ENCODE measurements at regions of chr5 and their contacts with region 1.

Region 1: GRCh38 chr5:42889311-42889933 is 77.7 kb upstream of the SELENOP start:
- DNase-seq: peak in 4 of 5 donors; percentile 68 to 78 (median 74)
- ATAC-seq: peak; percentile 86 to 96 (median 91)
- H3K4me3 ChIP-seq: no peak overlapping the region
- H3K27ac ChIP-seq: no peak overlapping the region
- H3K4me1 ChIP-seq: peaks cover 0 to 7% (median 0%) of the 10 kb centered on the region in 12 donors
- H3K27me3 ChIP-seq: no peaks in the 10 kb centered on the region
- CTCF ChIP-seq: peak; percentile 83 to 99 (median 91)
- POLR2A ChIP-seq: no peak

Region 2: GRCh38 chr5:41869739-41870626 is 1019.4 kb before region 1 on chr5 and contains the start of gene OXCT1:
- intact Hi-C with region 1: loop called in 1 of 10 experiments (anchors 5 kb)
- DNase-seq: peak; percentile 78 to 92 (median 85)
- ATAC-seq: peak; percentile 64 to 88 (median 84)
- H3K4me3 ChIP-seq: peak within 1 kb of the TSS; percentile 64 to 91 (median 78)
- H3K27ac ChIP-seq: peak within 1 kb of the TSS; percentile 84 to 96 (median 92)
- H3K4me1 ChIP-seq: peaks cover 0 to 35% (median 18%) of the 10 kb centered on the region in 12 donors
- H3K27me3 ChIP-seq: no peaks in the 10 kb centered on the region
- CTCF ChIP-seq: no peak
- POLR2A ChIP-seq: peak in 1 of 2 donors; percentile 67
- total RNA-seq, gene OXCT1: 73.4 to 363 (median 205) TPM

Region 3: GRCh38 chr5:42005561-42006153 is 883.8 kb before region 1 on chr5:
- intact Hi-C with region 1: loop called in 2 of 10 experiments (anchors 10 kb)
- DNase-seq: no peak
- ATAC-seq: no peak
- H3K4me3 ChIP-seq: no peak overlapping the region
- H3K27ac ChIP-seq: no peak overlapping the region
- H3K4me1 ChIP-seq: no peaks in the 10 kb centered on the region
- H3K27me3 ChIP-seq: no peaks in the 10 kb centered on the region
- CTCF ChIP-seq: peak; percentile 49 to 77 (median 66)
- POLR2A ChIP-seq: no peak

Region 4: DNA sequence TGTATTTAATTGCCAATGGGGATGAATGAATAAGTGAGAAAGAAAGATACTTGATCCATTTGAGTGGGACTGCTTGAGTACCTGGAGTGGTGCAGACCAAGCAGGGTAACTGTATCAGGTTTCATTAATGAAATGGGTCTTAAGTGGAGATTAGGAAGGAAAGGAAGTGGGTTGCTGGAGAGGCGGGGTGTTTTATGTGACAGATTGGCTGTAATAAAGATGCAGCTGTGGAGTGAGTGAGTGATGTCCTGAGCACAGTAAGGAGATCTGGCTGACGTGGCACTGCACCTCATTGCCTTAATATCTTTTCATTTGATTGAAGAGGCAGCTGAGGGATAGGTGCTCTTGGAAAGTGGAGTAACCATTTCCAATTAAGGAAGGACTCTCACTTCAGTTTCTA is 293.8 kb before region 1 on chr5:
- intact Hi-C with region 1: no loop called
- DNase-seq: no peak
- ATAC-seq: no peak
- H3K4me3 ChIP-seq: no peak overlapping the region
- H3K27ac ChIP-seq: no peak overlapping the region
- H3K4me1 ChIP-seq: peaks cover 0 to 35% (median 23%) of the 10 kb centered on the region in 12 donors
- H3K27me3 ChIP-seq: no peaks in the 10 kb centered on the region
- CTCF ChIP-seq: no peak
- POLR2A ChIP-seq: no peak

Region 5: GRCh38 chr5:42767491-42768105 is 121.8 kb before region 1 on chr5:
- intact Hi-C with region 1: loop called in 6 of 10 experiments (anchors 2 to 10 kb)
- DNase-seq: no peak
- ATAC-seq: peak in 1 of 4 donors; percentile 52
- H3K4me3 ChIP-seq: no peak overlapping the region
- H3K27ac ChIP-seq: no peak overlapping the region
- H3K4me1 ChIP-seq: peaks cover 0 to 4% (median 0%) of the 10 kb centered on the region in 12 donors
- H3K27me3 ChIP-seq: no peaks in the 10 kb centered on the region
- CTCF ChIP-seq: peak; percentile 27 to 71 (median 58)
- POLR2A ChIP-seq: no peak

Region 6: GRCh38 chr5:42811591-42812446 is 77.6 kb before region 1 on chr5 and contains the start of gene SELENOP:
- intact Hi-C with region 1: loop called in 9 of 10 experiments (anchors 1 to 10 kb)
- DNase-seq: peak in 4 of 5 donors; percentile 49 to 79 (median 66)
- ATAC-seq: peak; percentile 95 to 96 (median 96)
- H3K4me3 ChIP-seq: peak within 1 kb of the TSS; percentile 18 to 70 (median 58)
- H3K27ac ChIP-seq: peak within 1 kb of the TSS; percentile 69 to 94 (median 87)
- H3K4me1 ChIP-seq: peaks cover 0 to 40% (median 24%) of the 10 kb centered on the region in 12 donors
- H3K27me3 ChIP-seq: no peaks in the 10 kb centered on the region
- CTCF ChIP-seq: no peak
- POLR2A ChIP-seq: peak; percentile 30 to 90
- total RNA-seq, gene SELENOP: 167 to 547 (median 255) TPM

Region 7: GRCh38 chr5:42858031-42858643 is 31.3 kb before region 1 on chr5:
- intact Hi-C with region 1: no loop called
- DNase-seq: peak in 1 of 5 donors; percentile 31
- ATAC-seq: peak; percentile 70 to 90 (median 82)
- H3K4me3 ChIP-seq: no peak overlapping the region
- H3K27ac ChIP-seq: peak overlapping the region in 11 of 12 donors; percentile 3 to 72 (median 46)
- H3K4me1 ChIP-seq: peaks cover 0 to 21% (median 10%) of the 10 kb centered on the region in 12 donors
- H3K27me3 ChIP-seq: no peaks in the 10 kb centered on the region
- CTCF ChIP-seq: no peak
- POLR2A ChIP-seq: no peak